ENCODE measurements at regions of chr16 and their contacts with region 1.

Region 1: GRCh38 chr16:87316923-87317749 is at the start of gene C16orf95:
- DNase-seq: peak; percentile 96
- H3K4me3 ChIP-seq: peak within 1 kb of the TSS; percentile 48 to 75 (median 50)
- H3K27ac ChIP-seq: peak within 1 kb of the TSS; percentile 69 to 89 (median 87)
- H3K4me1 ChIP-seq: peaks cover 6 to 10% of the 10 kb centered on the region in 2 donors
- H3K27me3 ChIP-seq: no peaks in the 10 kb centered on the region
- CTCF ChIP-seq: peak in 5 of 6 experiments; percentile 35 to 61 (median 51)
- POLR2A ChIP-seq: peak; percentile 26 to 92
- total RNA-seq, gene C16orf95: 0.54 to 1.3 (median 0.54) TPM in 3 of 4 donors, not detected in the other

Region 2: DNA sequence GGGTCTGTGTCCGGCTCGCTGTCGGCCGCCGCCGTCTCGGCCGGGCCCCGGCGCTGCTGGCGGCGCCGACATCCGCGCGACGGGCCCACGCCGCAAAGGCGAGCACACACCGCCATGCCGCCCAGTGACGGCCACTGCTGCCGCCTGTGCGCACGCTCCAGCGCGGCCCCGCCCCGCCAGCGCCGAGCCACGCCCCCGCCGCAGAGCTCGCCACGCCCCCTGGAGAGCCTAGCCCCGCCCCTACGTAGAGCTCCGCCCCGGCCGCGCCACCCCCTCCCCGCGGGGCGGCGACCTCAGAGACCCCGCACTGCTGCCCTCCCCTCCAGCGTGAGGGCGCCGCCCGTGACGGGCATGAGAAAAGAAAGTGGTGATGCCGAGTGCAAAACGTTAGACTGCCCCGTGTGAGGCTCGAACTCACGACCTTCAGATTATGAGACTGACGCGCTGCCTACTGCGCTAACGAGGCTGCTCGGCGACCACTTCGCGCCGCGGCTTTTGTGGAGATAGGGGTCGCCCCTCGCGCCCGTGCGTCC is 66.6 kb after region 1 on chr16 and contains the start of gene FBXO31:
- intact Hi-C with region 1: loop called (anchors 5 kb)
- DNase-seq: peak; percentile 75 to 78
- H3K4me3 ChIP-seq: peak within 1 kb of the TSS; percentile 20 to 88 (median 70)
- H3K27ac ChIP-seq: peak within 1 kb of the TSS; percentile 55 to 95 (median 95)
- H3K4me1 ChIP-seq: peaks cover 20 to 43% of the 10 kb centered on the region in 2 donors
- H3K27me3 ChIP-seq: no peaks in the 10 kb centered on the region
- CTCF ChIP-seq: no peak
- POLR2A ChIP-seq: peak; percentile 91 to 98
- total RNA-seq, gene FBXO31: 23.8 to 62.5 (median 54.9) TPM